Activated CD4-positive, alpha-beta T cell treated with anti-CD3 and anti-CD28 coated beads for 36 hours (primary cell): ENCODE measurements at regions of chr15 and their contacts with region 1.

Region 1: DNA sequence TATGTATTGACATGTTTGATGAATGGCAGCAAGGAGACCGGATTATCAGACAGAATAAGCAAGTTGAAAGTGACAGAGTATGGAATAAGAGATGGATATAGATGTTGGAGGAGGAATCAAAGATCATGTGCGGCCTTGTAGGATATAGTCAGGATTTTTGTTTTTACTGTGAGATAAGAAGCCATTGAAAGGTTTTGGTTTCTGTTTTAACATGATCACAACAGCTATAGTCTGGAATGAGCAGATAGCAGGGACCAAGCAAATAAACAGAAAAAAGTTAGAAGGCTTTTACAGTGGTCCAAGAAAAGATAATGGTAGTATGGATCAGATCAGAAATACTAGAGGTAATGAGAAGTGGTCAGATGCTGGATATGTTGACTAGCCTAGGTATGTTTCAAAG is 52.6 kb downstream of the SLC12A6 start:
- DNase-seq: no peak
- ATAC-seq: peak; percentile 53
- H3K4me3 Mint-ChIP-seq: no peak overlapping the region
- H3K27ac Mint-ChIP-seq: peak overlapping the region; percentile 71
- H3K4me1 Mint-ChIP-seq: peaks cover 22% of the 10 kb centered on the region
- H3K27me3 Mint-ChIP-seq: no peaks in the 10 kb centered on the region

Region 2: GRCh38 chr15:34324933-34325332 is 40.0 kb after region 1 on chr15:
- CTCF ChIA-PET with region 1: no interaction called
- POLR2A ChIA-PET with region 1: no interaction called
- intact Hi-C with region 1: loop called in 1 of 2 experiments (anchors 5 kb)
- DNase-seq: no peak
- ATAC-seq: no peak
- H3K4me3 Mint-ChIP-seq: no peak overlapping the region
- H3K27ac Mint-ChIP-seq: peak overlapping the region; percentile 47
- H3K4me1 Mint-ChIP-seq: peaks cover 73% of the 10 kb centered on the region
- H3K27me3 Mint-ChIP-seq: no peaks in the 10 kb centered on the region